GM13977 (cell line): ENCODE measurements at regions of chr9 and their contacts with region 1.

Region 1: DNA sequence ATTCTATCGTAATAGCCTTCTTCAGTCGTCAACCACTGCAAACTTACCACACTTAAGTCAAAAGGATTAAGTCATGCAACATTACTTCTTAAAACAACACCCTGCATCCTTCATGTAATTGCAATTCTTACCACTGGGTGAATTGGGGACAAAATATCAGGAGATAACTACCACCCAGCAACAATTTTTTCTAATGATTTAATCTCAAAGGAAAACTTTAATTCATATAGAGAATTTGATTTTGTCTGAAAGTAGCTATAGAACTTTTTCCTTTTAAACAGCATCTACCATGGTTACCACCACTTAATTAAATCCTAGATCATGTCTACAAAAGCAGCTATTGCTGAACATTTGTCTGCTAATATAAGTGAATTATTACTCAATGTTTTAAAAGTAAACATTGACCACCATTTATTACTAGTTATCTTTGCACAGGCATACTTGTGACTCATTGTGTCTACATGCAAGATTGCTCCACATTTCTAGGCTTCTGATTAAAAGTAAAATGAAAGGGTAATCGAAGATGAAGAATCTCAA is 10.5 kb downstream of the MLLT3 start:
- DNase-seq: no peak
- CTCF ChIP-seq: no peak

Region 2: GRCh38 chr9:20562051-20562450 is 49.8 kb before region 1 on chr9:
- in situ Hi-C with region 1: loop called (anchors 10 kb)
- DNase-seq: no peak
- CTCF ChIP-seq: no peak